ENCODE measurements at regions of chr1 and their contacts with region 1.

Region 1: DNA sequence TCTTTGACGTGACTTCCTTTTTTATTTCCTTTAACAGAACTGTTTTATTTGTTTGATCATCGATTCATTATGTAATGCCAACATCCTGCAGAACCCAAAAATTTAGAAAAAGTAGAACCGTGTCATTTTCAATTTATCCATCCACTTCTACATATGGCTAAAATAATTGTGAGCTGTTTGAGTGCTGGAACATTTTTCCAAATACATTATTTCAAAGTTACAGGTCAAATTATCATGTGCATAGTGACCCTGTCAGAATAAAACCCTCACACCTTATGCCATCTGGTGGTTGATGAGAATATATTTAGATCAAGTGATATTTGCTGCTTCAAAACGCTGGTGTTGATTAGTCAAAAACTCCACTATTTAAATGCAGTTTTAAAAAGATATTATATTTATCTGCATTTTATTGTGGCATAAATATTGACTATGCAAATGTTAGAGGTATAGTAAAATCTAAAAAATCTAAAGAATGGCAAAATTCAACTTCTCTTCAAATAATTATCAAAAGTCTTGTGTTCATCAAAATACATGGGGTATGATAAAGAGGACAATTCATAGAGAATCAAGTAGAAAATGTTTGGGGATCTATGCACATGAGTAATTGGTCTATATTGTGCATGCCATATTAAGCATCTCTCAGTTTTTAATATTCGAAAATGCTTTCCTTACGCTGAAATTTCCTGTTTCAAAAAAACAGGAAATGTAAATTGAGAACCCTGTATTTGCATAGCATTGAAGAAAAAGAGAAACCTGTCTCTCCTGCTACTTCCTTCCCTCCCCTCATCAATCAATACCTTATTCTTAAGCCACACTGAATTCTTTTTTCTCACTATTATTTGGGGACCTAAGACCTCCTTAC is 39.7 kb downstream of the UBE2U start:
- DNase-seq: peak; percentile 21
- ATAC-seq: no peak
- H3K4me3 ChIP-seq: peak overlapping the region in 1 of 5 experiments; percentile 44
- H3K4me3 Mint-ChIP-seq: peak overlapping the region; percentile 60
- H3K27ac ChIP-seq: no peak overlapping the region
- H3K27ac Mint-ChIP-seq: no peak overlapping the region
- H3K4me1 ChIP-seq: peaks cover 9 to 13% of the 10 kb centered on the region in 2 donors
- H3K4me1 Mint-ChIP-seq: peaks cover 13% of the 10 kb centered on the region
- H3K27me3 ChIP-seq: peaks cover 0 to 13% (median 1%) of the 10 kb centered on the region in 4 experiments
- H3K27me3 Mint-ChIP-seq: peaks cover 19% of the 10 kb centered on the region
- CTCF ChIP-seq: peak; percentile 63

Region 2: DNA sequence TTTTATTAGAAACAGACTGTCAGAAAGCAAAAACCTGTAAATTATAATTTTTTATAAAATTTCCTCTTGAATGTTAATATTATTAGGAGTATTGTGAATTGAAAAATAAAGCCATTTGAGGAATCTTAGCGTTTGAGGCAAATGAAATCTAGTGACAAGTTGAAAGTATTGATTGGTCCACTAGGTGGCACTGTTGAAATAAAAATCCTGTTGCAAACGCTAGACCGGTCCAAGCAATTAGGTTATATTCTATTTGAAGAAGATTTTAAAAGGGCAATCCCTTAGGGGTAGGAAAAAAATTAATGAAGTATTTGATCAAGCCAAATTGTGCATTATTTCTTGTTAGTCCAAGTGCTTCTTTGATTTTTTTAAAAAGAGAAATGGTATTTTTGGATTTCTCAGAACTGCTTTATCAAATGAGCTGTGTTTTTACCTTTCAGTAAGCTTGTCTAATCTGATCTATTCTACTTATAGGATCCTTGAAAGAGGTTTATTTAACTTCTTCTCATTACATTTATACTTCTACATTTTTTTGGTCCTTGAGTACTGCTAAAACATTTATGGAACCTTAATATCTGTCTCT is 1401.4 kb before region 1 on chr1:
- CTCF ChIA-PET with region 1: interaction called, 3 read pairs
- POLR2A ChIA-PET with region 1: no interaction called
- intact Hi-C with region 1: loop called (anchors 10 kb)
- DNase-seq: peak; percentile 70
- ATAC-seq: peak; percentile 62
- H3K4me3 ChIP-seq: no peak overlapping the region
- H3K4me3 Mint-ChIP-seq: no peak overlapping the region
- H3K27ac ChIP-seq: no peak overlapping the region
- H3K27ac Mint-ChIP-seq: no peak overlapping the region
- H3K4me1 ChIP-seq: no peaks in the 10 kb centered on the region
- H3K4me1 Mint-ChIP-seq: peaks cover 2% of the 10 kb centered on the region
- H3K27me3 ChIP-seq: no peaks in the 10 kb centered on the region
- H3K27me3 Mint-ChIP-seq: no peaks in the 10 kb centered on the region
- CTCF ChIP-seq: peak; percentile 88

Region 3: GRCh38 chr1:63575340-63575826 is 667.7 kb before region 1 on chr1:
- CTCF ChIA-PET with region 1: interaction called, 28 read pairs
- POLR2A ChIA-PET with region 1: no interaction called
- intact Hi-C with region 1: loop called (anchors 1 kb)
- DNase-seq: peak; percentile 46
- ATAC-seq: peak; percentile 33
- H3K4me3 ChIP-seq: no peak overlapping the region
- H3K4me3 Mint-ChIP-seq: no peak overlapping the region
- H3K27ac ChIP-seq: no peak overlapping the region
- H3K27ac Mint-ChIP-seq: no peak overlapping the region
- H3K4me1 ChIP-seq: no peaks in the 10 kb centered on the region
- H3K4me1 Mint-ChIP-seq: no peaks in the 10 kb centered on the region
- H3K27me3 ChIP-seq: no peaks in the 10 kb centered on the region
- H3K27me3 Mint-ChIP-seq: no peaks in the 10 kb centered on the region
- CTCF ChIP-seq: peak; percentile 94

Region 4: GRCh38 chr1:63615768-63616420 is 627.2 kb before region 1 on chr1:
- CTCF ChIA-PET with region 1: interaction called, 68 read pairs
- POLR2A ChIA-PET with region 1: no interaction called
- intact Hi-C with region 1: loop called (anchors 1 kb)
- DNase-seq: peak; percentile 80
- ATAC-seq: peak; percentile 71
- H3K4me3 ChIP-seq: no peak overlapping the region
- H3K4me3 Mint-ChIP-seq: no peak overlapping the region
- H3K27ac ChIP-seq: no peak overlapping the region
- H3K27ac Mint-ChIP-seq: no peak overlapping the region
- H3K4me1 ChIP-seq: no peaks in the 10 kb centered on the region
- H3K4me1 Mint-ChIP-seq: no peaks in the 10 kb centered on the region
- H3K27me3 ChIP-seq: no peaks in the 10 kb centered on the region
- H3K27me3 Mint-ChIP-seq: no peaks in the 10 kb centered on the region
- CTCF ChIP-seq: peak; percentile 91

Region 5: GRCh38 chr1:63621698-63622097 is 621.4 kb before region 1 on chr1:
- CTCF ChIA-PET with region 1: interaction called, 68 read pairs
- POLR2A ChIA-PET with region 1: no interaction called
- intact Hi-C with region 1: no loop called
- DNase-seq: no peak
- ATAC-seq: no peak
- H3K4me3 ChIP-seq: no peak overlapping the region
- H3K4me3 Mint-ChIP-seq: no peak overlapping the region
- H3K27ac ChIP-seq: no peak overlapping the region
- H3K27ac Mint-ChIP-seq: no peak overlapping the region
- H3K4me1 ChIP-seq: no peaks in the 10 kb centered on the region
- H3K4me1 Mint-ChIP-seq: no peaks in the 10 kb centered on the region
- H3K27me3 ChIP-seq: no peaks in the 10 kb centered on the region
- H3K27me3 Mint-ChIP-seq: no peaks in the 10 kb centered on the region
- CTCF ChIP-seq: no peak

Region 6: GRCh38 chr1:63674238-63674864 is 568.8 kb before region 1 on chr1:
- CTCF ChIA-PET with region 1: interaction called, 3 read pairs
- POLR2A ChIA-PET with region 1: no interaction called
- intact Hi-C with region 1: loop called (anchors 1 kb)
- DNase-seq: no peak
- ATAC-seq: no peak
- H3K4me3 ChIP-seq: no peak overlapping the region
- H3K4me3 Mint-ChIP-seq: no peak overlapping the region
- H3K27ac ChIP-seq: no peak overlapping the region
- H3K27ac Mint-ChIP-seq: no peak overlapping the region
- H3K4me1 ChIP-seq: no peaks in the 10 kb centered on the region
- H3K4me1 Mint-ChIP-seq: no peaks in the 10 kb centered on the region
- H3K27me3 ChIP-seq: no peaks in the 10 kb centered on the region
- H3K27me3 Mint-ChIP-seq: no peaks in the 10 kb centered on the region
- CTCF ChIP-seq: no peak

Region 7: GRCh38 chr1:64100791-64101190 is 142.3 kb before region 1 on chr1:
- CTCF ChIA-PET with region 1: no interaction called
- POLR2A ChIA-PET with region 1: no interaction called
- intact Hi-C with region 1: no loop called
- DNase-seq: no peak
- ATAC-seq: no peak
- H3K4me3 ChIP-seq: no peak overlapping the region
- H3K4me3 Mint-ChIP-seq: no peak overlapping the region
- H3K27ac ChIP-seq: no peak overlapping the region
- H3K27ac Mint-ChIP-seq: no peak overlapping the region
- H3K4me1 ChIP-seq: no peaks in the 10 kb centered on the region
- H3K4me1 Mint-ChIP-seq: no peaks in the 10 kb centered on the region
- H3K27me3 ChIP-seq: no peaks in the 10 kb centered on the region
- H3K27me3 Mint-ChIP-seq: no peaks in the 10 kb centered on the region
- CTCF ChIP-seq: no peak

Region 8: GRCh38 chr1:64136752-64137411 is 106.2 kb before region 1 on chr1:
- CTCF ChIA-PET with region 1: interaction called, 11 read pairs
- POLR2A ChIA-PET with region 1: no interaction called
- intact Hi-C with region 1: loop called (anchors 10 kb)
- DNase-seq: peak; percentile 68
- ATAC-seq: peak; percentile 80
- H3K4me3 ChIP-seq: no peak overlapping the region
- H3K4me3 Mint-ChIP-seq: no peak overlapping the region
- H3K27ac ChIP-seq: no peak overlapping the region
- H3K27ac Mint-ChIP-seq: no peak overlapping the region
- H3K4me1 ChIP-seq: no peaks in the 10 kb centered on the region
- H3K4me1 Mint-ChIP-seq: peaks cover 2% of the 10 kb centered on the region
- H3K27me3 ChIP-seq: peaks cover 0 to 4% (median 0%) of the 10 kb centered on the region in 4 experiments
- H3K27me3 Mint-ChIP-seq: peaks cover 15% of the 10 kb centered on the region
- CTCF ChIP-seq: peak; percentile 87

Region 9: GRCh38 chr1:64515427-64515826 is 272.3 kb after region 1 on chr1:
- CTCF ChIA-PET with region 1: no interaction called
- POLR2A ChIA-PET with region 1: no interaction called
- intact Hi-C with region 1: no loop called
- DNase-seq: no peak
- ATAC-seq: no peak
- H3K4me3 ChIP-seq: no peak overlapping the region
- H3K4me3 Mint-ChIP-seq: no peak overlapping the region
- H3K27ac ChIP-seq: no peak overlapping the region
- H3K27ac Mint-ChIP-seq: no peak overlapping the region
- H3K4me1 ChIP-seq: peaks cover 10 to 13% of the 10 kb centered on the region in 2 donors
- H3K4me1 Mint-ChIP-seq: peaks cover 14% of the 10 kb centered on the region
- H3K27me3 ChIP-seq: no peaks in the 10 kb centered on the region
- H3K27me3 Mint-ChIP-seq: peaks cover 6% of the 10 kb centered on the region
- CTCF ChIP-seq: no peak